IMR-90 (cell line): ENCODE measurements at regions of chr3 and their contacts with region 1.

Region 1: DNA sequence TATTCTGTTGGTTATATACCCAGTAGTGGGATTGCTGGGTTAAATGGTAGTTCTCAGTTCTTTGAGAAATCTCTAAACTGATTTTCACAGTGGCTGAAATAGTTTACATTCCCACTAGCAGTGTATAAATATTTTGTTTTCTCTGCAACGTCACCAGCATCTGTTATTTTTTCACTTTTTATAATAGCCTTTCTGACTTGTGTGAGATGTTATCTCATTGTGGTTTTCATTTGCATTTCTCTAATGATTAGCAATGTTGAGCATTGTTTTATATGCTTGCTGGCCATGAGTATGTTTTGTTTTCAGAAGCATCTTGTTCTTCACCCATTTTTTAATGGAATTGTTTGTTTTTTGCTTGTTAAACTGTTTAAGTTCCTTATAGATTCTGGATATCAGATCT is 612.7 kb upstream of the SGO1 start:
- DNase-seq: no peak
- ATAC-seq: no peak
- H3K4me3 ChIP-seq: no peak overlapping the region
- H3K27ac ChIP-seq: no peak overlapping the region
- H3K4me1 ChIP-seq: no peaks in the 10 kb centered on the region
- H3K27me3 ChIP-seq: no peaks in the 10 kb centered on the region
- CTCF ChIP-seq: no peak
- POLR2A ChIP-seq: no peak
- RAD21 ChIP-seq: no peak

Region 2: GRCh38 chr3:19473971-19474580 is 1324.6 kb before region 1 on chr3:
- CTCF ChIA-PET with region 1: no interaction called
- POLR2A ChIA-PET with region 1: no interaction called
- dilution Hi-C with region 1: no loop called
- in situ Hi-C with region 1: no loop called
- intact Hi-C with region 1: loop called (anchors 10 kb)
- DNase-seq: no peak
- ATAC-seq: no peak
- H3K4me3 ChIP-seq: no peak overlapping the region
- H3K27ac ChIP-seq: no peak overlapping the region
- H3K4me1 ChIP-seq: no peaks in the 10 kb centered on the region
- H3K27me3 ChIP-seq: no peaks in the 10 kb centered on the region
- CTCF ChIP-seq: no peak
- POLR2A ChIP-seq: no peak
- RAD21 ChIP-seq: no peak

Region 3: GRCh38 chr3:21585216-21585740 is 786.6 kb after region 1 on chr3:
- CTCF ChIA-PET with region 1: no interaction called
- POLR2A ChIA-PET with region 1: no interaction called
- dilution Hi-C with region 1: no loop called
- in situ Hi-C with region 1: no loop called
- intact Hi-C with region 1: no loop called
- DNase-seq: no peak
- ATAC-seq: no peak
- H3K4me3 ChIP-seq: no peak overlapping the region
- H3K27ac ChIP-seq: no peak overlapping the region
- H3K4me1 ChIP-seq: no peaks in the 10 kb centered on the region
- H3K27me3 ChIP-seq: no peaks in the 10 kb centered on the region
- CTCF ChIP-seq: no peak
- POLR2A ChIP-seq: no peak
- RAD21 ChIP-seq: no peak